GM13977 (cell line): ENCODE measurements at regions of chr17 and their contacts with region 1.

Region 1: DNA sequence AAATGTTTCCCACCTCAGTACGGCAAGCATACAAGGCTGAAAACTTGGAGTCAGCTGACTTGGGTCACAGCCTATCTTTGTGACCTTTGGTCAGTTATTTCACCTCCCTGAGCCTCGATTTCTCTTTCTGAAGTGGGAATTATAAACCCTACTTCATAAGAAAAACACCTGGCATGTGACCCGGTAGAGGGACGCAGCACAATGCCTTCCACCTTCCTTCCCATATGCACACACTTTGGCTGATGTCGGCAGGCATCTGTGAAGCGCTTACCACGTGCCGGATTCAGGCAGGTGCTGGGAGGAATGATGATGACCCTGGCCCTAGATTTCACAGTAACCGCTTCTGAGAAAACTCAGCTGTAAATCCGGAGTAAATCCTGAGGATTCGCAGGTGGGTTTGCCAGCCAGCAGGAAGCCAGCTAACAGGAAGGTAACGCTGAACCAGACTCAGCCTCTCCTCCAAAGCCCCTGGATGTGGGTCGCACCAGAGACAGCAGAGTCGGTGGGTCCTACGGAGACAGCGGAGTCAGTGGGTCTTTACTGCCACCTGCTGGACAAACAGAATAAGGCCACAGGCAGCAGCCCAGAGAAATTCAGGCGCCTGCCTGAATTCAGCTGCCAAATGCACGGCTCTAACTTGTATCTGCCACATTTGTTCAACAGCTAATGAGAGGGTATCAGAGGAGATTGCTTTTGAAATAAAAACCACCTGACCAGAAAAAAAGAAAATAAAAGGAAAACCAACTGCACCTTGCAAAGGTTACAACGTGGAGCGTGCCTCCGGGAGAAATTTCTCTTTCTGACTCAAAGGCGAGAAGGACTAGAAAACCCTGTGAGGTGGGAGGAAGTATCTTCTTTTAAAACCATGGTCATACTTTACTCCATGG is 16.6 kb downstream of the COPRS start:
- DNase-seq: peak; percentile 76
- CTCF ChIP-seq: peak; percentile 89

Region 2: DNA sequence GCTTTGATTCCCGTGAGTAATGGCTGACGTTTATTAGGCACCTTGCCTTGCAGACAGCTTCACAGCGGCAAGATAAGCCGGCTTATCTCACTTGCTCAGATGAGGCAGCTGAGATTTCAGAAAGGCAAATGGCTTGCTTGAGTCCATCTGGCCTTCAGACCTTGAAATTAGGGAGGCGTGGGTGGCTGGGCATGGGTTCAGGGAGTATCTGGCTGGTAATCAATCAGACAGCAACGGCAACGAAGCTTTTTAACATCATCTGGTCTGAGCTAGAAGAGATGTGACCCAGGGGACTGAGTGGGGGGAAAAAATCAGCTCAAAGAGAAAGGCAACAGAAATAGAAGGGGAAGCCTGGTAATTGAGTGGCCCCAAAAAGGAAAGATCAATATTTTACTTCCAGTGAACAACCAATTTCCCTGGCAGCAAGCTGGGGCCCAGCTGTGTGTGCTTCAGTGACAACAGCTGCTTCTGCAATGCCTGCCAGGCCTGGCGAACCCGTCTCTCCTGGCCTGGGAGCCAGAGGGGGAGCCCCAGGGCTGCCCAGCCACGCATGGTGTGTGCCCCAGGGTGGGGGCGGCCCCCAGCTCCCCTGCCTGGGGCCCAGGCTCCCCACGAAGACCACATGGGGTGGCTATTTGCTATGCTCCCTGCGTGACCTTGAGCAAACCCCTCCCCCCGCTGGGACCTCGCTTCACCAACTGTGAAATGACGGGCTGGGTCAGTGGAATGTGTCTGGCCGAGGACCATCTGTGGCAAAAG is 417.0 kb before region 1 on chr17:
- in situ Hi-C with region 1: loop called (anchors 25 kb)
- DNase-seq: no peak
- CTCF ChIP-seq: no peak

Region 3: DNA sequence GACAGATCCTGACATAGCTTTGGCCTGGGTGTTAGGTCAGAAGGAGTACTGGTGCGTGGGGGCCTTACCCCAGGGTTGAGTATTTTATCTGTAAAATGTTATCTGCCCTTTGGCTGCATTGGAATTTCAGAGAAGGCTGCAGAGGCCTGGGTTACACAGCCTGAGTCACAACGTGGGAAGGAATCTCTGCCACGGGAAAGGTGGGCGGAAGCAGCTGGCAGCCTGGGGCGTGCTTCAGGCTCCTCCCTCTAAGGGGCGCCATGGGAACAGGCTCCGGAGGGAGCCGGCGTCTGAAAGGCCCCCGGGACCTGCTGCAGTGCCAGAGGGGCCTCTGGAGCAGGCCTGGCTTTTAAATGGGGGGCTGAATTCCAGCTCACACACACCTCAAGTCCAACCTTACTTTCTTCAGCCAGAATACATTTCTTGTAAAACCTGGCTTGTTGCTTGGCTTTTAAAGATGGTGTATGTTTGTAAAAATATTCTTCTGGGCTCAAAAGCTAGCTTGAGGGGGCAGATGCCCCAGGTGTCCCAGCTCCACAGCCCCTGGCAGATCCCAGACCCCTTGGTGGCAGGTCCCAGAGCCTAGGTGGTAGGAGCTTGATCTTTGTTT is 308.8 kb before region 1 on chr17:
- in situ Hi-C with region 1: loop called (anchors 10 kb)
- DNase-seq: peak; percentile 39
- CTCF ChIP-seq: peak; percentile 54